KBM-7 (cell line): ENCODE measurements at regions of chr14 and their contacts with region 1.

Region 1: DNA sequence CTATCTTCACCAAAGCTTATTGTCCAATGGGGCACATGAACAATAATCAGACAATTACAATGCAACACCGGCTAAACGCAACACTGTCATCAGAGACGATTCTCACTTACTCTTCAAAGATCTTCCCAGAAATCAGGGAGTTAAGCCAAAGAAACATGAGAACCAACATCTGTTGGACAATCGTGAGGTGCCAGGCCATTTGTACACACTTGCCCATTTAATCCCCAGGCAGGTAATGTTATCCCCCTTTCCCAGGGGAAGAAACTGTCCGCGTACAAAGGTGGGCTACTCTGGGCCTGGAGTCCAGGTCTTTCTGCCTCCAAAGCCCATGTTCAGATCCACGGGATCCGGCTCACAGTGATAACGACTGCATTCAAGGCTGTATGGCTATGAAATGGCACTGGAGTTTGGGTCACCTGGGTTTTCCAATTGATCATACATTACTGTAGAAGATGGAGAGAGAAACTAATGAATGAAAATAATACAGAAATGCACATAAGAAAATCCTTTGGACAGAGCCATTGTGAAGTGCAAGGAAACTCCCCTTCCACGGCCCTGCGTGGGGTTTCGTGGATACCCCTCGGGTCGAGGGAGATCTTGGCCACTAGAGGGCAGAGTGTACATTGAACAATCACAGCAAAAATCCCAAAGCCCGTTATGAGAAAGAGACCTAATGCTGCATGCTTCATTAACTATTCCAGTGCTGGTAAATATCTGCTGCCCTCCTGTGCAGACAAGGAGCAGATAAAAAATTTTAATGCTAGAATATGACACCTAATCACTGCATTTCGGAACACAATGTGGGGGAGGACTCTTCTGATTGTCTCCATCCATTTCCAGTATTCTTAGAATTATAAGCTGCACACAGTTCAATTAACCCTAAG is 111.4 kb downstream of the EGLN3 start:
- DNase-seq: peak; percentile 55

Region 2: GRCh38 chr14:34227834-34228649 is 388.6 kb after region 1 on chr14:
- in situ Hi-C with region 1: loop called (anchors 25 kb)
- DNase-seq: peak; percentile 66

Region 3: GRCh38 chr14:34322940-34323418 is 483.5 kb after region 1 on chr14:
- in situ Hi-C with region 1: loop called (anchors 25 kb)
- DNase-seq: peak; percentile 60